Activated T-helper 1 cell treated with anti-CD3 and anti-CD28 coated beads, Interleukin-12 subunit alpha, Interleukin-12 subunit beta, Interleukin-2, Interleukin-4 antibody, amounts not matched to agents 30 ng/mL and 10 ng/mL and 1 ng/mL, durations not matched to agents 14 hours and 24 hours and 36 hours (primary cell): ENCODE measurements at regions of chr15 and their contacts with region 1.

Region 1: GRCh38 chr15:69576035-69576526 is 123.5 kb downstream of the RPLP1 start:
- DNase-seq: peak; percentile 26
- H3K4me3 Mint-ChIP-seq: no peak overlapping the region
- H3K27ac Mint-ChIP-seq: no peak overlapping the region
- H3K4me1 Mint-ChIP-seq: peaks cover 35% of the 10 kb centered on the region
- H3K27me3 Mint-ChIP-seq: peaks cover 5% of the 10 kb centered on the region

Region 2: GRCh38 chr15:69475769-69476358 is 100.2 kb before region 1 on chr15:
- intact Hi-C with region 1: loop called (anchors 10 kb)
- DNase-seq: peak; percentile 55
- H3K4me3 Mint-ChIP-seq: no peak overlapping the region
- H3K27ac Mint-ChIP-seq: no peak overlapping the region
- H3K4me1 Mint-ChIP-seq: no peaks in the 10 kb centered on the region
- H3K27me3 Mint-ChIP-seq: peaks cover 23% of the 10 kb centered on the region

Region 3: DNA sequence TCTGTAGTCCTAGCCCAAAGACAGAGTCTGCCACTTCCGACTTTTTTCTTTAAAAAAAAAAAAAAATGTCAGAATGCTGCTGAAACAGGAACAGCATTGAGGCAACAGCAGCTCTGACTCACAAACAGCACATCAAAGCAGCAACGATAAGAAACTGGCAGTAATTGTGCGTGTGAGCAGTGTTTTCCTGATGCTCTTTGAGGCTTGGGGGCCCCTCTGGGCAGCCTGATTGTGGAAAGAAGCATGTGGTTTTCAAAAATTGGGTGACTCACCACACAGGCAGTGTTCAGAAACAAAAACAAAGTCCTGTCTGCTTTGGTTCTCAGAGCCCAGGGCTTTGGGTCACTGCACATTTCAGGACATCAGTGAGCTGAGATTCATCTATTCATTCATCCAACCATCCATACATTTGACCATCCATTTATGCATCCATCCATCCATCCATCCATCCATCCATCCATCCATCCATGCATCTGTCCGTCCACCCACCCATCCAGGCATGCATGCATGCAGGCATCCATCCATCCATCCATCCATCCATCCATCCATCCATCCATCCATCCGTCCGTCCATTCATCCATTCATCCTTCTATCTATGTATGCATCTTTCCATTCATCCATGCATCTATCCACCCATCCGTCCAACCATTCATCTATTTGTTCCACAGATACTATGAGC is 184.9 kb after region 1 on chr15:
- intact Hi-C with region 1: loop called (anchors 2 kb)
- DNase-seq: peak; percentile 79
- H3K4me3 Mint-ChIP-seq: peak overlapping the region; percentile 72
- H3K27ac Mint-ChIP-seq: peak overlapping the region; percentile 92
- H3K4me1 Mint-ChIP-seq: peaks cover 81% of the 10 kb centered on the region
- H3K27me3 Mint-ChIP-seq: peaks cover 2% of the 10 kb centered on the region

Region 4: GRCh38 chr15:70236341-70237086 is 660.4 kb after region 1 on chr15:
- intact Hi-C with region 1: no loop called
- DNase-seq: no peak
- H3K4me3 Mint-ChIP-seq: no peak overlapping the region
- H3K27ac Mint-ChIP-seq: no peak overlapping the region
- H3K4me1 Mint-ChIP-seq: peaks cover 39% of the 10 kb centered on the region
- H3K27me3 Mint-ChIP-seq: peaks cover 33% of the 10 kb centered on the region

Region 5: GRCh38 chr15:70299931-70300869 is 724.1 kb after region 1 on chr15:
- intact Hi-C with region 1: loop called (anchors 5 kb)
- DNase-seq: peak; percentile 71
- H3K4me3 Mint-ChIP-seq: no peak overlapping the region
- H3K27ac Mint-ChIP-seq: peak overlapping the region; percentile 24
- H3K4me1 Mint-ChIP-seq: peaks cover 9% of the 10 kb centered on the region
- H3K27me3 Mint-ChIP-seq: peaks cover 22% of the 10 kb centered on the region

Region 6: GRCh38 chr15:70713714-70714414 is 1137.8 kb after region 1 on chr15:
- intact Hi-C with region 1: loop called (anchors 10 kb)
- DNase-seq: no peak
- H3K4me3 Mint-ChIP-seq: no peak overlapping the region
- H3K27ac Mint-ChIP-seq: no peak overlapping the region
- H3K4me1 Mint-ChIP-seq: no peaks in the 10 kb centered on the region
- H3K27me3 Mint-ChIP-seq: peaks cover 41% of the 10 kb centered on the region